SK-N-SH (cell line): ENCODE measurements at regions of chr1 and their contacts with region 1.

Region 1: DNA sequence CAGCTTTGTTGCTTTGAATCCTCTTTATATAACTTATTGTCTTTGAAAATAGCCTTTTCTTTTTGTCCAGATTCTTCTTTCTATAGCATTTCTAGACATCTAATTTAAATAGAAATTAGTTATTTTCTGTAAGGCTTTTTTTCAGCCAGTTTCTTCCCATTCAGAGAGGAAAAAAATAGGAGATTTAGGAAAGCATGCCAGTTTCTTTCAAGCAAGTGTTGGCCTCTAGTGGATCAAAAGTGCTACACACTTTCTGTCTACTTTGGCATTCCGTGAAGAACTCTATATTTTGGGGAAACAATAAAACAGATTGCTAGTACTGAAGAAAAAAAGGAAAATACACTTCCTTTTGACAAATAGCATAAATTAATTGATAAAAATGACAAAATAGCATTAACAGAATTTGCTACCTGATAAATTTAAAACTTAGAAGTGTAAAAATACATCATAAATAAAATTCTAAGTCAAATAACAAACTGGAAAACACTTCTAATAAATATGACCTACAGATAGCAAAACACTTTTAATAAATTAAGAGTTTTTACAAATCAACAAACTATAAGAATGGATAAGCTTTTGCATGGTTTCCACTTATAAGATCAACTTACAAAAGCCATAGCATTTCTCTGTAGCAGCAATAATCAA is 13.1 kb upstream of the EXO1 start:
- DNase-seq: peak; percentile 26
- H3K4me3 ChIP-seq: no peak overlapping the region; a peak in 1 of 4 replicates
- H3K27ac ChIP-seq: no peak overlapping the region
- H3K4me1 ChIP-seq: no peaks in the 10 kb centered on the region; a peak in 1 of 4 replicates
- H3K27me3 ChIP-seq: no peaks in the 10 kb centered on the region
- CTCF ChIP-seq: peak; percentile 75
- EP300 ChIP-seq: no peak
- RAD21 ChIP-seq: peak; percentile 82

Region 2: GRCh38 chr1:241542199-241542910 is 292.5 kb before region 1 on chr1:
- CTCF ChIA-PET with region 1: no interaction called
- POLR2A ChIA-PET with region 1: no interaction called
- DNase-seq: no peak
- H3K4me3 ChIP-seq: no peak overlapping the region
- H3K27ac ChIP-seq: no peak overlapping the region
- H3K4me1 ChIP-seq: no peaks in the 10 kb centered on the region
- H3K27me3 ChIP-seq: no peaks in the 10 kb centered on the region
- CTCF ChIP-seq: no peak
- EP300 ChIP-seq: no peak
- RAD21 ChIP-seq: no peak

Region 3: DNA sequence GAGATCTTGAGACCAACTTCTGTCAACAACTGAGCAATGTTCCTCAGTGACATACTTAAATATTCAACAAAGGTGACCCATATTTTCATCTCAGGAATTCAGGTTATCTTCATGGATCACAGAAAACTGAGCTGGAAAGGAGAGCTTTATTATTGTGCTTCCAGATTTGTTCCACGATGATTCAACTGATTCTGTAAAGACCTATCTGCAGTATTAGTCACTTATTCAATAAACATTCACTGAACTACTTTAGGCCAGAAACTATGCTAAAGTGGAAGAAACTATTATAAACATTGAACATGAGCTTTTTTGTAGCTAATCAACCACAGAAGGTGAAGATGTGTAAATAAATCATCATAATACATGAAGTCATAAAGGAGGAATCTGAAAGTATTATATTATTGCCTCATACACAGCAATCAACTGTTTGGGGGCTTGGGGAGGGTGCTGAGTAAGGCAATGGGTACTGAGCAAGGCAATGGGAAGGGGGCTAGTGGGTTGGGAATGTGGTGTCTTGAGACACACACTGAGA is 17.5 kb before region 1 on chr1:
- CTCF ChIA-PET with region 1: interaction called, 10 read pairs
- POLR2A ChIA-PET with region 1: no interaction called
- DNase-seq: no peak
- H3K4me3 ChIP-seq: no peak overlapping the region
- H3K27ac ChIP-seq: no peak overlapping the region
- H3K4me1 ChIP-seq: no peaks in the 10 kb centered on the region
- H3K27me3 ChIP-seq: no peaks in the 10 kb centered on the region
- CTCF ChIP-seq: no peak
- EP300 ChIP-seq: no peak
- RAD21 ChIP-seq: no peak

Region 4: DNA sequence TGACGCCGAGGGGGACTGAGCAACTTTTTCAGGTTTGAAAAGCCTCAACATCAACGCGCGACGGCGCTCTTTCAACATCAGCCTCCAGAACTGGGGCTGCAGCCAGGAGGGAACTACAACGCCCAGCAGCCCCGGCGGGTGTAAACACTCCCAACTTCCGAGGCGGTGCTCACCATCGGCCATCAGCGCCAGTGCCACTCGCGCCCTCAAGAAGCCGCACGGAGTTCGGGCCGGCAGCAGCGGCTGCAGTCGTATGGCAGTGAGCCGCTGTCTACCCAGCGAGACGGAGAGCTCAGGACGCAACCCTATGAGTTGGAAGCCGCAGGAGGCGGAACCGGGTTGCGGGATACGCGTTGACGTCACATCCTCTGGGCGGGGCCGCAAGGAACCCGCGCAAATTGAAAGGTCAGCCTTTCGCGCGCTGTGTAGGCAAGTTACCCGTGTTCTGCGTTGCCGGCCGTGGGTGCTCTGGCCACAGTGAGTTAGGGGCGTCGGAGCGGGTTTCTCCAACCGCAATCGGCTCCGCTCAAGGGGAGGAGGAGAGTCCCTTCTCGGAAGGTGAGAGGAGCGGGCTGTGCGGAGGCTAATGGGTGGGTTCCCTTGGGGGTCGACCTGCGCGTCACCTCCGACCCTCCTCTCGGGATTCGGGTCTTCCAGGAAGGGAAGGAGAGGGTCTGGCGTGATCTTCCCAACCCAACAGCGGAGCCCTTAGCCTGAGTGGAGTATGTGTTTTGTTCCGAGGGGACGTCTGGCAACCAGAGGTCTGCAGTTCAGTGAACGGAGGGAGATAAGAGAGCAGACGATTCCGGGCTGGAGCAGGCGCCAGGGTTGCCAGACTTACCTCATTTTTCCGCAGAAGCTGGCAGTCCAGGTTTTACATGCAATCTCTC is 13.2 kb after region 1 on chr1 and contains the start of gene EXO1:
- CTCF ChIA-PET with region 1: interaction called, 16 read pairs
- POLR2A ChIA-PET with region 1: interaction called, 3 read pairs
- DNase-seq: peak; percentile 92
- H3K4me3 ChIP-seq: peak within 1 kb of the TSS; percentile 96 to 99
- H3K27ac ChIP-seq: peak within 1 kb of the TSS; percentile 98 to 100
- H3K4me1 ChIP-seq: peaks cover 0 to 17% of the 10 kb centered on the region in 2 experiments; a peak in 2 of 4 replicates
- H3K27me3 ChIP-seq: no peaks in the 10 kb centered on the region
- CTCF ChIP-seq: peak; percentile 51
- EP300 ChIP-seq: no peak
- RAD21 ChIP-seq: peak; percentile 61
- polyA plus RNA-seq, gene EXO1: 3.9 and 4.6 TPM in 2 replicates